Endothelial cell of umbilical vein (primary cell): ENCODE measurements at regions of chr4 and their contacts with region 1.

Region 1: DNA sequence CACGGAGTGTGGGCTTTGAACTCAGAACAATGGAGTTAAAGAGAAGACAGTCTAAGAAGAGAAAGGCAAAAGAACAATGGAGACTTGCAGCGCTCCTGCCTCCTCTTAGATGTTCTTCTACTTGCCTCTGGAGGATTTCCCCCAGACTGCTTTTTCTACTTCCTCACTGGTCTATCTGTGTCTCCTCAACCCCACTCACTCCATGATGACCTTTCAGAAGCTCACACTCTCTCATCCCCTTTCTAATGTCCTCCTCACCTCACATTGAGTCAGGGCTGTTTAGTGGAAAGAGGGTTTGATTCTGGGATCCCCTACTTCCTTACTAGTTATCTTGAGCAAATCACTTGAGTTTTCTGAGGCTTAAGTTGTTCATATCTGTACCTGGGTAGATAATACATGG is 12.2 kb upstream of the HERC6 start:
- DNase-seq: no peak
- H3K4me3 ChIP-seq: no peak overlapping the region
- H3K27ac ChIP-seq: no peak overlapping the region
- H3K4me1 ChIP-seq: no peaks in the 10 kb centered on the region
- H3K27me3 ChIP-seq: peaks cover 0 to 2% of the 10 kb centered on the region in 2 experiments
- CTCF ChIP-seq: no peak
- POLR2A ChIP-seq: no peak

Region 2: GRCh38 chr4:88217920-88218319 is 148.5 kb before region 1 on chr4:
- CTCF ChIA-PET with region 1: interaction called, 62 read pairs
- POLR2A ChIA-PET with region 1: no interaction called
- dilution Hi-C with region 1: no loop called
- intact Hi-C with region 1: loop called (anchors 1 kb)
- DNase-seq: no peak
- H3K4me3 ChIP-seq: no peak overlapping the region
- H3K27ac ChIP-seq: no peak overlapping the region
- H3K4me1 ChIP-seq: no peaks in the 10 kb centered on the region
- H3K27me3 ChIP-seq: no peaks in the 10 kb centered on the region
- CTCF ChIP-seq: no peak
- POLR2A ChIP-seq: no peak

Region 3: GRCh38 chr4:88341227-88342192 is 24.9 kb before region 1 on chr4:
- CTCF ChIA-PET with region 1: interaction called, 11 read pairs
- POLR2A ChIA-PET with region 1: no interaction called
- dilution Hi-C with region 1: no loop called
- intact Hi-C with region 1: no loop called
- DNase-seq: peak; percentile 91
- H3K4me3 ChIP-seq: no peak overlapping the region
- H3K27ac ChIP-seq: peak overlapping the region; percentile 90
- H3K4me1 ChIP-seq: peaks cover 14% of the 10 kb centered on the region
- H3K27me3 ChIP-seq: no peaks in the 10 kb centered on the region
- CTCF ChIP-seq: no peak
- POLR2A ChIP-seq: no peak

Region 4: DNA sequence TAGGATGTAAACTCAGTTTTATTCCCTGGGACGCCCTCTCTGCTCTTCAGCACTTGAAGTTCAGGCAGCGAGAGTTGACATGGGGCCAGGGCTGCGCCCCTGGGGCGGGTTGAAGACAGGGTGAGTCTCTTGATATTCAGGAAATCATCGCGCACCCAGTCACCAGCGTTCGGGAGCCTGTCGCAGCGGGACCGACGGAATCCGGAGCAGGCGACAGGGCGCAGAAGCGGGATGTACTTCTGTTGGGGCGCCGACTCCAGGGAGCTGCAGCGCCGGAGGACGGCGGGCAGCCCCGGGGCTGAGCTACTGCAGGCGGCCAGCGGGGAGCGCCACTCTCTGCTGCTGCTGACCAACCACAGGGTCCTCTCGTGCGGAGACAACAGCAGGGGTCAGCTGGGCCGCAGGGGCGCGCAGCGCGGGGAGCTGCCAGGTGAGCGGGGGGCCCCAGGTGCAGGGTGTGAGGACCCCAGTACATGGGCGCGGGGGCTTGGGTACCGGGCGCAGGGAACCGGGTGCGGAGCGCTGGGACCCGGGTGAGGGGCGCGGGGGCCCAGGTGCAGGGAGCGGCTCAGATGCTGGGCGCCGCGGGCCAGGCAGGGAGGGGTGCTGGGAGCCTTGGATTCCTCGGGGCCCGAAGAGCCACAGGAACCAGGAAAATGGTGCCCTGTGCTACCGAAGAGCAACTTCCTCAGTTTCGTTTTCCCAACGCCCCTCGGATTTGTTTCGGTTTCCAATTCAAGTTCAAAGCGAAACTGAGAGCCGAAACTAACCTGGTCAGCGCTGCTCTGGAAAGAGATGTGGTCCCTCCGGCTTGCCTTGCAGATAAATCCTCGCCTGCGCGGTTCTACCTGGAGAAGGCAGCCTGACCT is 12.5 kb after region 1 on chr4 and contains the start of gene HERC6:
- CTCF ChIA-PET with region 1: interaction called, 15 read pairs
- POLR2A ChIA-PET with region 1: no interaction called
- dilution Hi-C with region 1: no loop called
- intact Hi-C with region 1: no loop called
- DNase-seq: peak; percentile 81
- H3K4me3 ChIP-seq: peak within 1 kb of the TSS; percentile 76 to 91 (median 89)
- H3K27ac ChIP-seq: peak within 1 kb of the TSS; percentile 61
- H3K4me1 ChIP-seq: peaks cover 3% of the 10 kb centered on the region
- H3K27me3 ChIP-seq: peaks cover 0 to 3% of the 10 kb centered on the region in 2 experiments
- CTCF ChIP-seq: peak; percentile 72 to 91
- POLR2A ChIP-seq: no peak
- total RNA-seq, gene HERC6: 4.1 and 5.0 TPM in 2 replicates

Region 5: DNA sequence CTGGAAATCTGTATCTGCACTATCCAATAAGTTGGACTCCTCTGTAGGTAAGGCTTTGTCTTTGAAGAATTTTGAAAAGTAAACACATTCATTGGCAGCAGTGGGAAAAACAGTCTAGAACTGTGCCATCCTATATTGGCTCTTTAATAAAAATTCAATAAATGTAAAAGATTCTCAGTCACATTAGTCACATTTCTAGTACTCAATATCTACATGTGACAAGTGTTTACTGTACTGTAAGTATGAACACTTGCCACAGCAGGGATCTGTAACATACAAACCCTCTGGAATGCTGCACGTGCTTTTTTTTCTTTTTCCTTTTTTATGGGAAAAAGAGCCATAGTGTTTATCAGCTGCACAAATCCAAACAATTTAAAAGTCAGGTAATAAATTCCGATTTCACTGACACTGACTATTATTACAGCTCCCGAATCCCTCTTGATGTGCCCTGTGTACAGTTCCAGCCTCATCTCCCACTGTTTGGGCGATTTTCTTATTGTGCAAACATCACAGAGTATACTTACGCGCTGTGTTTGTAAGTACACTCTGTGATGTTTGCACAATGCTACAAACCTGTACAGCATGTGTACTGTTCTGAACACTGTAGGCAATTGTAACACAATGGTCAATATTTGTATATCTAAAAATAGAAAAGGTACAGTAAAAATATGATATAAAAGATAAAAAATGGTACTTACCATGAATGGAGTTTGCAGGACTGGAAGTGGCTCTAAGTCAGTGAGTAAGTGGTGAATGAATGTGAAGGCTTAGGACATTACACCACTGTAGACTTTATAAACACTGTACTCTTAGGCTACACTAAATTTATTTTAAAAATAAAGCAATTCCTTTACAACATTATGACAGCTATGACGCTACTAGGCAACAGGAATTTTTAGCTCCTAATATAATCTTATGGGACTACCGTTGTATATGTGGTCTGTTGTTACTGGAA is 148.4 kb after region 1 on chr4:
- CTCF ChIA-PET with region 1: interaction called, 95 read pairs
- POLR2A ChIA-PET with region 1: no interaction called
- dilution Hi-C with region 1: no loop called
- intact Hi-C with region 1: loop called (anchors 1 kb)
- DNase-seq: no peak
- H3K4me3 ChIP-seq: no peak overlapping the region
- H3K27ac ChIP-seq: no peak overlapping the region
- H3K4me1 ChIP-seq: peaks cover 10% of the 10 kb centered on the region
- H3K27me3 ChIP-seq: no peaks in the 10 kb centered on the region
- CTCF ChIP-seq: no peak
- POLR2A ChIP-seq: no peak

Region 6: DNA sequence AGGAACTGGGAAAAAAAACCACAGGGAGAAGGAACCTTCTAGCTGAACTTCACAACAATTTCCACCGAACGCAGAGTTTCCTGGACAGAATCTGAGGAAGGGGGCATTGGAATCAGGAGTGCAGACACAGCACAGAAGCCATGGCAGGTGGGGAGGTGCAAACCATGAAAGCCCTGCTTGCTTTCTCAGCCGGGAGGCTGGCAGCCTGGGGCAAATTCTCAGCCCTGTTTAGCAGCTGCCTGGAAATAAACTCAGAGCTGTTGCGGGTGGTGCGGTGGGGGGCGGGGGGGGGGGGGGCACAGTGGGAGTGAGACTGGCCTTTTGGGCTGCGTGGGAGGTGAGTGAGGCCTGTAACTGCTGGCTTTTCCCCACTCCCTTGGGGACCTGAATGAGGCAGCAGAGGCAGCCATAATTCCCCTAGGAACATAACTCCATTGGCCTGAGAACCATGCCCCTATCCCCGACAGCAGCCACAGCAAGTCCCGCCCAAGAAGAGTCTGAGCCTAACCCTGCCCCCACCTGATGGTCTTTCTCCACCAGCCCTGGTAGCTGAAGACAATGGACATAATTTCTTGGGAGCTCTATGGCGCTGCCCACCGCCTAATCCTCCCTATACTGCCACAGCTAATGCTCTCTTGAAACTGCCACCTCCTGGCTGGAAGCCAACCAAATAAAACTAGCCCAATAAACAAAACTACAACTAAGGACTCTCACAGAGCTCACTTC is 514.2 kb after region 1 on chr4:
- CTCF ChIA-PET with region 1: no interaction called
- POLR2A ChIA-PET with region 1: no interaction called
- dilution Hi-C with region 1: no loop called
- intact Hi-C with region 1: no loop called
- DNase-seq: no peak
- H3K4me3 ChIP-seq: no peak overlapping the region
- H3K27ac ChIP-seq: no peak overlapping the region
- H3K4me1 ChIP-seq: no peaks in the 10 kb centered on the region
- H3K27me3 ChIP-seq: no peaks in the 10 kb centered on the region
- CTCF ChIP-seq: no peak
- POLR2A ChIP-seq: no peak